ENCODE measurements at regions of chr12 and their contacts with region 1.

Region 1: DNA sequence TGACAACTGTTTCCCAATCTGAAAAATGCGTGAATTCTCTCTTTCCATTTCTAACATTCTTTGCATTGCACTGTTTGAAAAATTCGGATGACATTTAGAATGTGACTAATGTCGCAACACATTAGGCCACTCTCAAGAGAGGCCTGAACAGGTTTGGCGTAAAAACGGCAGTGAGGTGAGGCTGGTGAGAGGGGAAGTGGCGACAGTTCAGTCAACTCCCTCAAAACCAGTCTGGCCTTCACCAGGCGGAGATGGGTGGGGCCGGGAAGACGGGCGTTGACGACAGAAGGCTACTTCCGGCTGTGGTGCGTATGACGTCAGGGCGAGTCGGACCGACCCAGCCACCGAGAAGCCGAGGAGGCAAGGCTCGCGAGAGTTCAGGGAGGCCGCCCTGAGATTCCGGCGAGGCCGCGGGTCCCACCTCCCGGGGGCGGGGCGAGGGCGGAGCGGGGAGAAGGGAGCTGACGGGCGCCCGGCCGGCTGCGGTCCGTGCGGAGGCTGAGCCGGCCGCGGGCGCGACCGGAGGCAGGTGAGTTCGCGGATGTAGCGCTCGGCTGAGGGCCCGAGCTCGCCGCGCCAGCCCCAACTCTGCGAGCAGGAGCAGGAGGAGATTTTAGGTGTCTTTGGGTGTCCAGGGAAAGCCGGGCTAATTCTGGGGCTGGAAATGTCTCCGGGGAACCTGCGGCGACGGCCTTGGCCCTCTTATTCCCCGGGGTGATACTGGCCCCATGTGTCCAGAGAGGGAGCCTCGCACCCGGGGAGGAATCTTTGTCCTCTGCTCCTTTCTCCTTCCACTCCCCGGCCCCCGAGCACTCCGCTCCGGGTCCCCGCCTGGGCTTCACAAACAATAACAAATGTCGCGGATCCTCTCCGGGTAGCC is at the start of gene STK38L:
- DNase-seq: peak; percentile 99
- ATAC-seq: peak; percentile 99
- total RNA-seq, gene STK38L: 48.7 TPM

Region 2: DNA sequence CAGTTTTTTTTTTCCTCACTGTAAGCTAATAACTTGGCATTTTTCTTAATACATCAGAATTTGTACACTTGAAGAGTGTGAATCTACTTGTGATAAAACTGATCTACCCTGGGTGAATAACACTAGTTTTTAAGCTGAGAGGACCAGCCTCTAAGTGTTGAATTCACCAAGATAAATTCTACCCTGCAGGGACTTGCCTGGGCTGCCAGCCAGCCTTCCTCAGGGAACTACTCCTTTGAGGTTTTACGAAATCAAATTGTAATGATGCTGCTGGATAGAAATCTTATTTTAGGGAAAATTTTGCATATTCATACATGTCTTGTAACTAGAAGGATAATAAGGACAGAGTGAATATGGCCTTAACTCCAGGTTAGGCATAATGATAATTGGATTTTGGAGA is 219.8 kb before region 1 on chr12:
- intact Hi-C with region 1: loop called (anchors 5 kb)
- DNase-seq: no peak
- ATAC-seq: no peak

Region 3: DNA sequence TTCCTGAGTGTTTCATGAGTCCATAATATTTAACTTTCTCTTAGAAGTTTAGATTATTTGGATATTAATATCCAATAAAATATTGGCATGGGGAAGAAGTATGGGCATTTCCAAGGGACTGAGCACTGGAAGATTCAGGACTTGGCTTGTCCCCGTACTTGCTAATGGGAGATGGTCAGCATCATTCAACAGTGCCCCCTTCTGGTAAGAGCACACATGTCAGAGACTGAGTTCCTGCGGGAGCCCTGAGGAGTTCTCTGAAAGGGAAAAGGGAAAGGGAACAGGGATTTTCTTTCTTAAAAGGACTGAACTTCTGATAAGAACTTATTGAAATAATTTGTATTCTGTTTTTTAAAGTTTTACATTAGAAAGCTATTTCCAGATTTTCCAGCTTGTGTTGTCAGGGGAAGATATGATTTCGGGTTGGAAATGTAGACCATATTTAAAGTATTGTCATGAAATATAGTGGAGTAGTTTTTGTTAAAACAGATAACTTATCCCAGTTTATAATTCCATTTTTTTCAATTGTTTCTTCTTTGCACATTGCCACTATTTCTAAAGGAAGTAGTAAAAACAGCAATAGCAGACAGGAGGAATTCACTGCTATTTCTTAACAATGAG is 101.8 kb before region 1 on chr12:
- intact Hi-C with region 1: loop called (anchors 1 kb)
- DNase-seq: no peak
- ATAC-seq: peak; percentile 86